Naive thymus-derived CD8-positive, alpha-beta T cell (primary cell): ENCODE measurements at regions of chr19 and their contacts with region 1.

Region 1: DNA sequence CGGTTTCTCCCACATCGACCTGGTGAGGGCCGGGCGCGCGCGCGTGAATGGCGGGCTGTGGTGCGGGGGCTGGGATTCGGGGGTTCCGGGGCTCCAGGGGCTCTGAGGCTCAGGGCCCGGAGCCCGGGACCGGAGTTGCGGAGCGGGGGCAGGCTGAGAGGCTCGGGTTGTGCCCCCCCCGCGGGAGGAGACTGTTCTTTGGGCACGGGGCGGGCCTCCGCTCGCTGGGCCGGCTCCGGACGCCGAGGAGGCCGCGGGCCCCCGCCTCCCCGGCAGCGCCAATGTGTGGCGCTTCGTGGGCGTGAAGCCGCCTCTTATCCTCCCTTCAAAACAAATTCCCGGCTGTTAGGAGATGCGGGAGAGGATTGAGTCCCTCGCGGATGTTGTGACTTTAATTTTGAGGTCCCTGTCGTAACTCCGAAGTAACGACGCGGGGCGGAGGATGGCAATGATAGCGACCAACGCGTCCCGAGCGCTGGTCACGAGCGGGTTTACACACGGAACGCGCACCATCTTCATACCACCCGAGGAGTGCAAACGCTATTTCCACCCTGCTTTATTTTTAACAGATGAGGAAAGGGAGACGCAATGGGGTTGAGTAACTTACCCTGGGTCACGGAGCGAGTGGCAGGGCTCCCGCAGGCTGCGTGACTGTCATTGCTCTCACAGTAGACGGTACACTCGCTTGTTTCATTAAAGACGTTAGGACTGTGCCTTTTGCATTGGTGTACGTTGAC is 536 bp downstream of the UBA2 start:
- DNase-seq: peak in 4 of 10 donors; percentile 16 to 65 (median 38)
- ATAC-seq: peak; percentile 43 to 57
- H3K4me3 Mint-ChIP-seq: peak overlapping the region; percentile 92 to 98 (median 96)
- H3K27ac Mint-ChIP-seq: peak overlapping the region; percentile 86 to 98 (median 96)
- H3K4me1 Mint-ChIP-seq: peaks cover 11 to 42% (median 33%) of the 10 kb centered on the region in 4 donors
- H3K27me3 Mint-ChIP-seq: no peaks in the 10 kb centered on the region

Region 2: GRCh38 chr19:34241513-34242337 is 187.0 kb before region 1 on chr19:
- POLR2A ChIA-PET with region 1: interaction called, 10 read pairs
- DNase-seq: no peak
- ATAC-seq: peak; percentile 44 to 47
- H3K4me3 Mint-ChIP-seq: no peak overlapping the region
- H3K27ac Mint-ChIP-seq: peak overlapping the region in 3 of 10 donors; percentile 55 to 75 (median 55)
- H3K4me1 Mint-ChIP-seq: peaks cover 0 to 9% (median 5%) of the 10 kb centered on the region in 4 donors
- H3K27me3 Mint-ChIP-seq: no peaks in the 10 kb centered on the region

Region 3: GRCh38 chr19:34317311-34317927 is 111.3 kb before region 1 on chr19:
- POLR2A ChIA-PET with region 1: no interaction called
- DNase-seq: peak in 7 of 10 donors; percentile 22 to 51 (median 25)
- ATAC-seq: peak; percentile 81 to 86
- H3K4me3 Mint-ChIP-seq: peak overlapping the region; percentile 25 to 79 (median 68)
- H3K27ac Mint-ChIP-seq: peak overlapping the region; percentile 33 to 96 (median 88)
- H3K4me1 Mint-ChIP-seq: peaks cover 25 to 68% (median 57%) of the 10 kb centered on the region in 4 donors
- H3K27me3 Mint-ChIP-seq: no peaks in the 10 kb centered on the region

Region 4: DNA sequence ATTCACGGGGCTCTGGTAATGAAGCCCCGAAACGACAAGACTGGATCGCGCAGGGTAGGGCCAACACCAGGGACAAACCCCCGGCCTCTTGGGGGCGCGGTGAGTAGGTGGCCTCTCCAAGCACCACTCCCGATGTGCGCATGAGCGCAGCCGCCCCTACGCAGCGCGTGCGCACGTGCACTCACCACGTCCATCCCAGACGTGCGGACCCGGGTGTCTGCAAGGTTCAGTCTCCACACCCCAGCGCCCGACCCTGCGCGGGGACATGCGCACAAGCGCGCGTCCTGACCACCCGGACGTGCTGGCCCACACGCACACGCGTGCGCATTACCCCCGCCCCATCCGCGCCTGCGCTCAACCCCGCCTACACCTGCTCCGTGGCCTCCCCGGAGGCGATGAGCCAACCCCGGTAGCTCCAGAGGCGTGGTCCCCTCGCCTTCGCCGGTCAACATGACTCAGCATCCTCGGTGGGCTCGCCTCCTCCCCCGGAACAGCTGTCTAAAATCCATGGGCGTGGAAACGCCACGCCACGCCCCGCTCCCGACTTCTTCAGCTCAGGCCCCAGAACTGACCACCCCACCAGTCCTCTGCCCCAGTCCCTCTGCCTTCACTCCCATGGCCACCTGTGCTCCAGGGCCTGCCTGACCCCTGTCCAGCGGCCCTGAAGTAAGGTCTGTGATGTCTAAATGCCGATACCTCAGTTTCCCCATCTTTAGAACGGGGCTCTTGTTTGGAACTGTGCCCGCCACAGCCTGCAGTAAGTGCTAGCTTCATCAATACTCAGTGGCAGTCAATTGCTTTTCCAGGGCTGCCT is 69.4 kb before region 1 on chr19:
- POLR2A ChIA-PET with region 1: interaction called, 18 read pairs
- DNase-seq: peak; percentile 79 to 97 (median 90)
- ATAC-seq: peak; percentile 89 to 91
- H3K4me3 Mint-ChIP-seq: peak overlapping the region; percentile 82 to 96 (median 90)
- H3K27ac Mint-ChIP-seq: peak overlapping the region; percentile 89 to 97 (median 95)
- H3K4me1 Mint-ChIP-seq: peaks cover 14 to 30% (median 27%) of the 10 kb centered on the region in 4 donors
- H3K27me3 Mint-ChIP-seq: no peaks in the 10 kb centered on the region

Region 5: DNA sequence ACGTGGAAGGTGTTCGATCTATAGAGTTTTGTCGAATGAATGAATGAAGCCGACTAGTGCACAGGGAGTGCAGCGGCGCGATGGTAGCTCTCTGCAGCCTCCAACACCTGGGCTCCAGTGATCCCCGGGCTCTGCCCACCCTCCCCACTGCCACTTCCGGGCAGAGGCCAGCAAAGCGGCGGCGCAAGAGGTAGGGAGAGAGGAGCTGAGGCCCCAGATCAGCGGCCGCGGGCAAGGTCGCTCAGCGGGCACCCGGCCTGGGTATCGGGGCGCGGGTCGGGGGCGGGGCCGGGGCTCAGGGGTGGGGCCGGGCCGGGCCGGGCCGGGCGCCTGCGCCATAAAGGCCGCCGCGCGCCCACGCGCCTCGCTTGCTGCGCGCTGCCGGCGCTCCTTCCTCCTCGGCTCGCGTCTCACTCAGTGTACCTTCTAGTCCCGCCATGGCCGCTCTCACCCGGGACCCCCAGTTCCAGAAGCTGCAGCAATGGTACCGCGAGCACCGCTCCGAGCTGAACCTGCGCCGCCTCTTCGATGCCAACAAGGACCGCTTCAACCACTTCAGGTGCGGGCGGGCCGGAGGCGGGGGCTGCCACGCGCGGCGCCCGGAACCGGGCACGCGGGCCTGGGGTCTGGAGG is 63.8 kb before region 1 on chr19 and contains the start of gene GPI:
- POLR2A ChIA-PET with region 1: interaction called, 18 read pairs
- DNase-seq: peak; percentile 51 to 76 (median 65)
- ATAC-seq: peak; percentile 91 to 92
- H3K4me3 Mint-ChIP-seq: peak within 1 kb of the TSS; percentile 92 to 98 (median 95)
- H3K27ac Mint-ChIP-seq: peak within 1 kb of the TSS; percentile 80 to 95 (median 93)
- H3K4me1 Mint-ChIP-seq: peaks cover 20 to 41% (median 35%) of the 10 kb centered on the region in 4 donors
- H3K27me3 Mint-ChIP-seq: no peaks in the 10 kb centered on the region
- polyA plus RNA-seq, gene GPI: 126 to 179 (median 142) TPM

Region 6: GRCh38 chr19:34468409-34468808 is 39.7 kb after region 1 on chr19:
- POLR2A ChIA-PET with region 1: no interaction called
- DNase-seq: no peak
- ATAC-seq: no peak
- H3K4me3 Mint-ChIP-seq: no peak overlapping the region
- H3K27ac Mint-ChIP-seq: peak overlapping the region in 3 of 10 donors; percentile 2 to 15 (median 7)
- H3K4me1 Mint-ChIP-seq: peaks cover 0 to 2% (median under 1%) of the 10 kb centered on the region in 4 donors
- H3K27me3 Mint-ChIP-seq: no peaks in the 10 kb centered on the region